ENCODE measurements at regions of chr9 and their contacts with region 1.

Region 1: GRCh38 chr9:2087500-2088313 is 72.6 kb downstream of the SMARCA2 start:
- DNase-seq: no peak
- H3K4me3 ChIP-seq: no peak overlapping the region
- H3K27ac ChIP-seq: no peak overlapping the region
- H3K27me3 ChIP-seq: no peaks in the 10 kb centered on the region
- CTCF ChIP-seq: peak; percentile 68

Region 2: GRCh38 chr9:1701113-1701512 is 386.6 kb before region 1 on chr9:
- CTCF ChIA-PET with region 1: no interaction called
- POLR2A ChIA-PET with region 1: no interaction called
- DNase-seq: no peak
- H3K4me3 ChIP-seq: no peak overlapping the region
- H3K27ac ChIP-seq: no peak overlapping the region
- H3K27me3 ChIP-seq: no peaks in the 10 kb centered on the region
- CTCF ChIP-seq: no peak

Region 3: GRCh38 chr9:1939926-1940368 is 147.8 kb before region 1 on chr9:
- CTCF ChIA-PET with region 1: interaction called, 28 read pairs
- POLR2A ChIA-PET with region 1: no interaction called
- DNase-seq: no peak
- H3K4me3 ChIP-seq: no peak overlapping the region
- H3K27ac ChIP-seq: no peak overlapping the region
- H3K27me3 ChIP-seq: no peaks in the 10 kb centered on the region
- CTCF ChIP-seq: peak; percentile 56

Region 4: GRCh38 chr9:2053883-2054845 is 33.5 kb before region 1 on chr9:
- CTCF ChIA-PET with region 1: interaction called, 14 read pairs
- POLR2A ChIA-PET with region 1: no interaction called
- DNase-seq: no peak
- H3K4me3 ChIP-seq: no peak overlapping the region
- H3K27ac ChIP-seq: no peak overlapping the region
- H3K27me3 ChIP-seq: no peaks in the 10 kb centered on the region
- CTCF ChIP-seq: no peak

Region 5: GRCh38 chr9:2066312-2067273 is 21.1 kb before region 1 on chr9:
- CTCF ChIA-PET with region 1: interaction called, 14 read pairs
- POLR2A ChIA-PET with region 1: no interaction called
- DNase-seq: no peak
- H3K4me3 ChIP-seq: no peak overlapping the region
- H3K27ac ChIP-seq: no peak overlapping the region
- H3K27me3 ChIP-seq: no peaks in the 10 kb centered on the region
- CTCF ChIP-seq: no peak

Region 6: GRCh38 chr9:2109069-2109650 is 21.5 kb after region 1 on chr9:
- CTCF ChIA-PET with region 1: interaction called, 15 read pairs
- POLR2A ChIA-PET with region 1: no interaction called
- DNase-seq: no peak
- H3K4me3 ChIP-seq: no peak overlapping the region
- H3K27ac ChIP-seq: no peak overlapping the region
- H3K27me3 ChIP-seq: no peaks in the 10 kb centered on the region
- CTCF ChIP-seq: no peak

Region 7: DNA sequence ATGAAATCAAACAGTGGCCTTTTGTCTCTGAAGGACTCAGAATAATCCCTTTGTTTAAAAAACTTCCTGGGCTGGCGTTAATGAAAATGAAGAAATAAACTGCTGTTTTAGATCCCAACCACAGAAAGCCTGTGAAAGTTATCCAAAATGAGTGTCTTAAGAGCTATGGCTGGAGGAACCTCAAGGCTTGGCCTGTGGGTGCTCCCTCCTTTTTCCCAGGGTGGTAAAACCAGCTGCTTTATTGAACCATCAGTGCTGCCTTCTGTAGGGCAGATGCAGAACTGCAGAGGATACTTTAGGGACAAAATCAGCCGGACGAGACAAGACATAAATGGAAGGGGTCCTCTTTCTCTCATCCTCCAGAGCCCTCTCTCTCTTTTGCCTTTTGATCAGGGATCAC is 28.4 kb after region 1 on chr9:
- CTCF ChIA-PET with region 1: interaction called, 11 read pairs
- POLR2A ChIA-PET with region 1: no interaction called
- DNase-seq: no peak
- H3K4me3 ChIP-seq: no peak overlapping the region
- H3K27ac ChIP-seq: no peak overlapping the region
- H3K27me3 ChIP-seq: no peaks in the 10 kb centered on the region
- CTCF ChIP-seq: peak; percentile 52

Measured in AG04450 (cell line).